AG04450 (cell line): ENCODE measurements at regions of chr1 and their contacts with region 1.

Region 1: DNA sequence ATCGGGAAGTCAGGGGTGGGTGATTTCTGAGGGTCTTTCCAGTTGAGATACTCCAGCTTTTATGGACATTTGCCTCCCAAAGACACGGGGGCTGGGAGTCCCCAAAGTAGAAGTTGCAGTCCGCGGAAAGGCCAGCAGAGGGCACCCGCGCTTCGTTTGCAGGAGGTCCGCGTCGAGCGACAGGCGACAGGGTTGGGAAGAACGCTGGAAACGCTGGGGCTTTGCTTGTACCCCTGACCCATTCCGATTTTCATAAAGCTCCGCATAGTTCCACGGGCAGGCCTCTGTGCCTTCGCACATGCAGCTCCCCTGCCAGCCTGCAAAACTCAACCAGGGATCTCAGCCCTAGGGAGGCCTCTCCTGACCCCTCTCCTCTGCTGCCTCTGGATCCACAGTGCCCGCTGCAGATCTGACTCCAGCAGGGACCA is 44.2 kb upstream of the LAPTM5 start:
- DNase-seq: no peak
- H3K4me3 ChIP-seq: no peak overlapping the region
- H3K27ac ChIP-seq: no peak overlapping the region
- H3K27me3 ChIP-seq: no peaks in the 10 kb centered on the region
- CTCF ChIP-seq: peak; percentile 97

Region 2: DNA sequence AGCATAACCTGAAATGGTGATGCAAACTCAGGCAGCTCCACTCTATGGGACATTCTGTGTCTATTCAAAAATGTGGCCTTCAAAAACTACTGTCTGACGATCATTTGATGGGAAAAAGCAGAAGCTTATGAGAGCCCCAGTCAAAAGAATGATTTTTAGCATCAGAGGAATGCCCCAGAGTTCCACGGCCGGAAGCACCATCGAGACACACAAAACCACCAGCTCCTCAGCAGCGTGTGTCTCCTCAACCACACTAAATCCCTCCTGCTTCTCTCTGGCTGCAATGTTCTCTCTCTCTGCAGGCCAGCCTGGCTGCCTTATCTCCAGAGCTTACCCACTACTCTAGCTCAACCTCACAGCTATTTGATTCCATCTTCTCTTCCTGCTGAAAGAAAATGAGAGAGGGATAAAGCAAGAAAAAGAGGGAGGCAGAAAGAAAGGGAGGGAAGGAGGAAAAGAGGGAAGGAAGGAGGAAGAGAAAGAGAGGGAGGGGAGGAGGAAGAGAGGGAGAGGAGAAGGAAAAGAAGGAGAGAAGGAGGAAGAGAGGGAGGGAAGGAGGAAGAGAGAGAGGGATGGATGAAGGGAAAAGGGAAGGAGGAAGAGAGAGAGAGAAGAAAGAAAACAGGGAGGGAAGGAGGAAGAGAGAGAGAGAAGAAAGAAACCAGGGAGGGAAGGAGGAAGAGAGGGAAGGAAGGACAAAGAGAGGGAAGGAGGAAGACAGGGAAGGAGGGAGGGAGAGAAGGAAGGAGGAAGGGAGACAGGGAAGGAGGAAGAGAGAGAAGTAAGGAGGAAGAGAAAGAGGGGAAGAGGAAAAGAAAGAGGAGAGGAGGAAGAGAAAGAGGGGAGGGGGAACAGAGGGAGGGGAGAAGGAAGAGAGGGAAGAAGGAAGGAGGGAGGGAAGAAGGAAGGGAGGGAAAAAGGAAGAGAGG is 10.7 kb before region 1 on chr1:
- CTCF ChIA-PET with region 1: interaction called, 44 read pairs
- POLR2A ChIA-PET with region 1: no interaction called
- DNase-seq: no peak
- H3K4me3 ChIP-seq: no peak overlapping the region
- H3K27ac ChIP-seq: no peak overlapping the region
- H3K27me3 ChIP-seq: peaks cover 9% of the 10 kb centered on the region
- CTCF ChIP-seq: no peak

Region 3: GRCh38 chr1:30830537-30830936 is 28.8 kb after region 1 on chr1:
- CTCF ChIA-PET with region 1: interaction called, 14 read pairs
- POLR2A ChIA-PET with region 1: no interaction called
- DNase-seq: no peak
- H3K4me3 ChIP-seq: no peak overlapping the region
- H3K27ac ChIP-seq: no peak overlapping the region
- H3K27me3 ChIP-seq: no peaks in the 10 kb centered on the region
- CTCF ChIP-seq: no peak

Region 4: GRCh38 chr1:30866594-30866993 is 64.8 kb after region 1 on chr1:
- CTCF ChIA-PET with region 1: interaction called, 14 read pairs
- POLR2A ChIA-PET with region 1: no interaction called
- DNase-seq: no peak
- H3K4me3 ChIP-seq: no peak overlapping the region
- H3K27ac ChIP-seq: no peak overlapping the region
- H3K27me3 ChIP-seq: no peaks in the 10 kb centered on the region
- CTCF ChIP-seq: no peak

Region 5: DNA sequence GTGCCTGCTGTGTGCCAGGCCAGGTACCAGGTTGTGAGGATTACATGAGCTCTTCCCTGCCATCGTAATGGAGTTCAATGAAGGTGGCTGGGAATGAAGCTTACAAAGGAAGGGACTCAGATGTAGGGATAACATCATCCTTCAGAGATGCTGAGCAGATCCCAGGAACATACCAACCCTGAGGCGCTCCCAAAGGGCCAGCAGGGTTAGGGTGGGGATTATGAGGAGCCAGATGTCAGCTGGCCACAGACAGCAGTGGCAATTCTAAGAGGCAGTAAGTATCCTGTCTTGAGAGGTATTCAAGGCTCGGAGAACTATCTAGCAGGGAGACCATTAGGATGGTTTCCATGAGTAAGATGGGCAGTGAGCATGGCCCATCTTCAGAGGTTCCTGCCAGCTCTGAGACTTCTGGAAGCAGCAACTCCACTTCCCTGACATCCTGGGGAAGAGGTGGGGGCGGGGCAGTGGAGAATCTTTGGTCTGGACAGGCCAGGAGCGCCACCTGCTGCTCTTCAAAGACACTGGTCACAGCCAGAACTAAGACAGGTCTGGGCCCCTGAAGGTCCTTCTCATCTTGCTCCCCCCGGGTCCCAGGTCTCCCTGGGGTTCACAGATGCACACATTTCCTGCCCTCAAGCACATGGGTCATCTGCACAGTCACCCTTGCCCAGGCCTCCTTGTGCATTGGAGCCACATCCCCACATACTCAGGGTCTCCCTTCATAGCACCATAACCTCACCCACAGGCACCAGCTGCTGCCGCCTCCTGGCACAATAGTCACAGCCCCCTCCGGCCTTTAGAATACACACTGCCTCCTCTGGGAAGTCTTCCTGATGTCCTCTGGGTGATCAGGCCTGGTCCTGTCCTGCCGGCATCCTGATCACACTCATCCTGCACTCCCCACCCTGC is 109.5 kb after region 1 on chr1:
- CTCF ChIA-PET with region 1: interaction called, 535 read pairs
- POLR2A ChIA-PET with region 1: interaction called, 3 read pairs
- DNase-seq: peak; percentile 68
- H3K4me3 ChIP-seq: no peak overlapping the region
- H3K27ac ChIP-seq: no peak overlapping the region
- H3K27me3 ChIP-seq: no peaks in the 10 kb centered on the region
- CTCF ChIP-seq: peak; percentile 87